ENCODE measurements at regions of chr22 and their contacts with region 1.

Region 1: DNA sequence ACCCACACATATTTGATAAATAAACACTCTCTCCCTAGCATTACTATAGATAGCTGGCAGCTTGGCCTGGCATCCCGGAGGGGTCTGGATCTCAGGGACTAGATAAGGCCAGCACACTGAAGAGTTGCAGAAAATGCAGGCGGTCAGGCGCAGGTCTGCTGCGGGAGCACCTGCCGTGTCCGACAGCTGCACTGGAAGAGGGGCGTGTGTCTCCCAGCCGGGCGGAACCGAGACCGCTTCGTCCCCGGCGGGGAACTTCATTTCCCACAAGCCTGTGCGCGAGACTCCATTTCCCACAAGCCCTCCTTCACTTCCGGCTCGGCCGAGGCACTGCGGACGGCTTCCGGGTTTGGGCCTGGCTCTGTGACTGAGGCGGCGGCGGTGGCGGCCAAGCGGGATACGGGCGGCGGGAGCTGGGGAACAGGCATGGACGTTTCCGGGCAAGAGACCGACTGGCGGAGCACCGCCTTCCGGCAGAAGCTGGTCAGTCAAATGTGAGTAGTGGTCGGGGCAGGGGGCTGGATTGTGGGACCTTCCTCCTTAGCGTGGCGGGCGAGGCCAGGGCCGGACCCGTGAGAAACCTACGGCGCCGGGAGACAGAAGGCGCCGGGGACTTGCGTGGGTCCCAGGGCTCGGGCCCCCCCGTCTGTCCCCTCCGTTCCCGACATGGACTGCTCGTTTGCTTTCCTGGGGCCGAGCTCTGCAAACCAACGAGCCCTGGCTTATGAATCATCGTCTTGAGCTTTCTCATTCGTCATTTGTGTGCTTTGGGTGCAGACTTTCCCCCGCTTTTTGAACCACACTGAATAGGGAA is at the start of gene MED15:
- DNase-seq: peak; percentile 94
- H3K4me3 Mint-ChIP-seq: peak within 1 kb of the TSS; percentile 91
- H3K27ac Mint-ChIP-seq: peak within 1 kb of the TSS; percentile 93
- H3K4me1 Mint-ChIP-seq: peaks cover 51% of the 10 kb centered on the region
- H3K27me3 Mint-ChIP-seq: no peaks in the 10 kb centered on the region
- total RNA-seq, gene MED15: 93.3 to 97.4 TPM

Region 2: DNA sequence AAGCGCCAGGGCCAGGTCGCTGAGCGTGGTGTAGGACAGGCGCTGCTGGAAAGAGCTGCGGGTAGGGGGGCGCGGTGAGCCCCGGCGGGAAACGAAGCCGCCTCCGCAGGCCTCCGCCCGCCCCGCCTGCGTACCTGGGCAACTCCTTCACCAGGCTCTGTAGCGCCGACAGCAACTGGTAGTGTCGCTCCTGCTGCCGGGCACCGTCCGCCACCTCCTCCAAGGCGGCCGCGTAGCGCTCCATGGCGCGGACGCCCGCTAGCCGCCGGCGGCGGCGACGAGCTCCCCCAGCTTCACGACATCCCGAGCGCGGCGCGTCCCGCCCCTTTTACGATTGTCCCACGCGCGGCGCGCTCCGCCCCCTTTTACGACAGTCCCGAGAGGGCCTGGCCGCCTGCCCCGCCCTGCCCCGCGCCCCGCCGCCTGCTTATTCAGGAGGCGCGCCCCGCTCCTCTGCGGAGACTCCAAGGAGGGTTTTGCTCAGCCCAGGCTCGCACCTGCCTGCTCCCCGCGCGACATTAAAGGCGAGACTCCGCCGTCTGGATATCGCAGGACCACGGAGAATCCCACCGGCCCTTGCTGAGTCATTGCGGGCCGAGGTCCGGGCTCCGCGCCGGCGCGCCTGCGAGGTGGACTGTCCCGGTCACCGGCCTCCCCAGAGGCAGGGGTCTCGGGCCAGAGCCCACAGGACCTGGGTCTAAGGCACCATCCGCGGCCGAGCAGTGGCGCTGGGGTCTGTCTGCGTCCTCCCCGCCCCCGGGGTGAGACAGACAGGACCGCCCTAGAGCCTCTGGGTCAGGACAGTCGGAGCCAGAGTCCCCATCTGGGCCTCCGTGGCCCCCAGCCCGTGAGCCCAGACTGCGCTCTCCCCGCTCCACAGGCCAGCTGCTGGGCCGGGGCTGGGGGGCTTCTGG is 187.5 kb before region 1 on chr22 and contains the start of gene DGCR6L:
- CTCF ChIA-PET with region 1: no interaction called
- POLR2A ChIA-PET with region 1: interaction called, 4 read pairs
- intact Hi-C with region 1: loop called (anchors 5 kb)
- DNase-seq: peak; percentile 98
- H3K4me3 Mint-ChIP-seq: peak within 1 kb of the TSS; percentile 93
- H3K27ac Mint-ChIP-seq: peak within 1 kb of the TSS; percentile 81
- H3K4me1 Mint-ChIP-seq: peaks cover 65% of the 10 kb centered on the region
- H3K27me3 Mint-ChIP-seq: no peaks in the 10 kb centered on the region
- total RNA-seq, gene DGCR6L: 26.9 to 31.3 TPM

Region 3: GRCh38 chr22:20441631-20442484 is 65.6 kb before region 1 on chr22:
- CTCF ChIA-PET with region 1: no interaction called
- POLR2A ChIA-PET with region 1: no interaction called
- intact Hi-C with region 1: no loop called
- DNase-seq: no peak
- H3K4me3 Mint-ChIP-seq: no peak overlapping the region
- H3K27ac Mint-ChIP-seq: no peak overlapping the region
- H3K4me1 Mint-ChIP-seq: peaks cover 6% of the 10 kb centered on the region
- H3K27me3 Mint-ChIP-seq: peaks cover 13% of the 10 kb centered on the region

Region 4: DNA sequence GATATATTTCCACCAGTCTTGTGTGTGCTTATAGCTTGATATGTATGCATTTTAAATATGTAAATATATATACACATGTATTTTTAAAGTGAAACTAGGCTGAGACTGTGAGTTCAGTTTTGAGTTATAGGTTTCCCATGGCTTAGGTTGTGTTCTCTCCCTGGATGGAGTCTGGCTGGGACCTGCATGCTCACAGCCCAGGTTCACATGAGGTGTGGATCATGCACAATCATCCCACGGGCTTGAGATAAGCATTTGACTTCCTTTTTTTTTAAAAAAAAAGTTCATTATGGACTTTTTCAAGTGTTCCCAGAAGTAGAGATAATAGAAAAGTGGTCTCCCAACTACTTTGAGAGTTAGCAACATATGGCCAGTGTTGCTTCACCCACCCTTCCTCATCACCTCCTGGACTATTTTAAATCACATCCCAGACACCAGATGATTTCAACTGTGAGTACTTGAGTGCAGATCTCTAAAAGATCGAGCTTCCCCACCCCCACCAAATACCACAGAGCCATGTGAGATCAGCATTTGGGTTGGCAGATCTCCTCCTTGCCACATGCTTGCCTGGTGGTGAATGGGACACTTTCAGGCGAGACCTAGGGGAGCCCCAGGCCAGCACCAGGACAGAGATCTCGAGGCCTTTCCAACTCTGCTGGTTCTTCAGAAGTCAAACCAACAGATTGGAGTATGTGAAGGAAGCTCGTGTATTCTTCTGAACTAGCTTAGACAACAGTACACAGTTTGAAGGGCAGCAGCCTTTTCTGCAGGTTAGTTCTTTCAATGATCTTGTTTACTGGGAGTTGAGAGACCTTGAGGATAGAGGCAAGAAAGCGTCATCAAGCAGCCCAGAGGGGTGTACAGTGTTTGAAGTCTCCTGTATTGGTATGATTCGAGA is 15.9 kb after region 1 on chr22:
- CTCF ChIA-PET with region 1: interaction called, 7 read pairs
- POLR2A ChIA-PET with region 1: interaction called, 13 read pairs
- intact Hi-C with region 1: loop called (anchors 2 kb)
- DNase-seq: peak; percentile 57
- H3K4me3 Mint-ChIP-seq: no peak overlapping the region
- H3K27ac Mint-ChIP-seq: peak overlapping the region; percentile 75
- H3K4me1 Mint-ChIP-seq: peaks cover 73% of the 10 kb centered on the region
- H3K27me3 Mint-ChIP-seq: no peaks in the 10 kb centered on the region

Region 5: GRCh38 chr22:20550821-20551744 is 43.6 kb after region 1 on chr22:
- CTCF ChIA-PET with region 1: interaction called, 28 read pairs
- POLR2A ChIA-PET with region 1: interaction called, 43 read pairs
- intact Hi-C with region 1: loop called (anchors 1 kb)
- DNase-seq: peak; percentile 86
- H3K4me3 Mint-ChIP-seq: peak overlapping the region; percentile 69
- H3K27ac Mint-ChIP-seq: peak overlapping the region; percentile 100
- H3K4me1 Mint-ChIP-seq: peaks cover 91% of the 10 kb centered on the region
- H3K27me3 Mint-ChIP-seq: no peaks in the 10 kb centered on the region

Region 6: GRCh38 chr22:20568989-20569769 is 61.7 kb after region 1 on chr22:
- CTCF ChIA-PET with region 1: interaction called, 41 read pairs
- POLR2A ChIA-PET with region 1: interaction called, 10 read pairs
- intact Hi-C with region 1: no loop called
- DNase-seq: peak; percentile 86
- H3K4me3 Mint-ChIP-seq: no peak overlapping the region
- H3K27ac Mint-ChIP-seq: peak overlapping the region; percentile 72
- H3K4me1 Mint-ChIP-seq: peaks cover 75% of the 10 kb centered on the region
- H3K27me3 Mint-ChIP-seq: no peaks in the 10 kb centered on the region